Activated T-helper 1 cell treated with anti-CD3 and anti-CD28 coated beads, Interleukin-12 subunit alpha, Interleukin-12 subunit beta, Interleukin-2, Interleukin-4 antibody, amounts not matched to agents 30 ng/mL and 10 ng/mL and 1 ng/mL, durations not matched to agents 14 hours and 24 hours and 36 hours (primary cell): ENCODE measurements at regions of chrX and their contacts with region 1.

Region 1: DNA sequence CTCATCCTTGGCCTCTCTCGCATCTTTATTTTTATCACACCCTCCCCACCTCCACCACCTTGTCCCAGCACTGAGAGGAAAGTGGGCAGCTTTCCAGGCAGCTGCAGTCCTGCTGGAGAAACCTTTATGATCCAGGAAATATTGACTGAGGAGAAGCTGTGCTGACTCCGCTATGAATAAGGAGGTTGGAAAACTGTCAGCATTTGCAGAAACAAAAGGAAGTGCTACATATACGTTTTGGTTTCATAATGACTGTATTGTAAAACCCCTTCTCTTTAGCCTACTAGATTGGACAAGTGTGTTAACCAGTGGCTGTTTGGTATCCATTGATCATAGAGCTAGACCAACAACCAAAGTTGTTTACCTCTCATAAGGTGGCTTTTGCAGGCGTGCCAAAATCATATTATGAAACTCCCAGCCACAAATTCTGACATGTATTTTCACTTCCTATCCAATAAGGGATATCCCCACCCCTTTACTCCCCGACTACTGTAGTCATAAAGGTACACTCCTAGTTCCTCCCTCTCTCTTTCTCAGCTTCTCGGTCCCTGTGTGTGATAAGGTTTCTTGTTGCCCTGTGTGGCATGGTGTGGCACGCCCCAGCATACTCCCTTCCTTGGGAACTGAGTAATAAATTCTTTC is 88.4 kb downstream of the GPR143 start:
- DNase-seq: peak; percentile 37
- H3K4me3 Mint-ChIP-seq: peak overlapping the region; percentile 33
- H3K27ac Mint-ChIP-seq: peak overlapping the region; percentile 64
- H3K4me1 Mint-ChIP-seq: peaks cover 18% of the 10 kb centered on the region
- H3K27me3 Mint-ChIP-seq: no peaks in the 10 kb centered on the region

Region 2: DNA sequence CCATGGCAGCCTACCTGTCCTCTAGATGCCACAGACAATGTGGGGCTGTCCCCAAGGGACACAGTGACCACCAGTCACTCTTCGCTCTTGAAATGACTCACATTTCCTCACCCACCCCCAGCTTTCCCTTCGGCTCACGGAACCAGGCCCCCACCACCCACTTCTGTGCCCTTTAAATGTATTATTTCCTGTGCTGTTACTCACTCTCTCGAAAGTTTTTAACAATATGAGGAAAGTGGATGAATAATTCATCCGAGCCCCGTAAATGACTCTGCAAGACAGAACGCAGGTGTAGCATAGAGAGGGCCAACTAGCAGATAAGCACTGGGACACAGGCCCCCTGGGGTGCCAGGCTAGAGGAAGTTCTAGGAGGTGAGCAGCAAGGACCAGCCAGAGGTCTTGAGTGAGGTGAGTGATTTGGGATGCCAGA is 391.9 kb before region 1 on chrX:
- intact Hi-C with region 1: loop called (anchors 1 kb)
- DNase-seq: peak; percentile 14
- H3K4me3 Mint-ChIP-seq: peak overlapping the region; percentile 37
- H3K27ac Mint-ChIP-seq: peak overlapping the region; percentile 94
- H3K4me1 Mint-ChIP-seq: peaks cover 38% of the 10 kb centered on the region
- H3K27me3 Mint-ChIP-seq: peaks cover 3% of the 10 kb centered on the region

Region 3: GRCh38 chrX:9456250-9457074 is 220.8 kb before region 1 on chrX:
- intact Hi-C with region 1: loop called (anchors 1 kb)
- DNase-seq: peak; percentile 26
- H3K4me3 Mint-ChIP-seq: peak overlapping the region; percentile 23
- H3K27ac Mint-ChIP-seq: peak overlapping the region; percentile 91
- H3K4me1 Mint-ChIP-seq: peaks cover 27% of the 10 kb centered on the region
- H3K27me3 Mint-ChIP-seq: no peaks in the 10 kb centered on the region

Region 4: DNA sequence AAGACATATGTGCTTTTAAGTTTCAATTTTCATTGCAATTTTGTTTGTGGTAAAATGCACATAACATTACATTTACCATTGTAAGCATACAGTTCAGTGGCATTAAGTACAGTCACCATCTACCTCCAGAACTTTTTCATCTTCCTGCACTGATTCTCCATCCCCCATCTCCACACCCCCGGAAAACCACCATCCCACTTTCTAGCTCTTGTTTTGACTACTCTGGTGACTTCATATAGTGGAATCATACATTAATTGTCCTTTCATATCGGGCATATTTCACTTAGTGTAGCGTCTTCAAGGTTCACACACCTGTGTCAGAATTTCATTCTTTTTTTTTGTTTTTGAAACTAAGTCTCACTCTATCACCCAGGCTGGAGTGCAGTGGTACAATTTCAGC is 55.1 kb before region 1 on chrX:
- intact Hi-C with region 1: loop called (anchors 1 kb)
- DNase-seq: no peak
- H3K4me3 Mint-ChIP-seq: no peak overlapping the region
- H3K27ac Mint-ChIP-seq: no peak overlapping the region
- H3K4me1 Mint-ChIP-seq: peaks cover 31% of the 10 kb centered on the region
- H3K27me3 Mint-ChIP-seq: peaks cover 2% of the 10 kb centered on the region

Region 5: GRCh38 chrX:9708904-9709553 is 31.8 kb after region 1 on chrX:
- intact Hi-C with region 1: loop called (anchors 2 kb)
- DNase-seq: peak; percentile 62
- H3K4me3 Mint-ChIP-seq: no peak overlapping the region
- H3K27ac Mint-ChIP-seq: no peak overlapping the region
- H3K4me1 Mint-ChIP-seq: peaks cover 8% of the 10 kb centered on the region
- H3K27me3 Mint-ChIP-seq: no peaks in the 10 kb centered on the region

Region 6: DNA sequence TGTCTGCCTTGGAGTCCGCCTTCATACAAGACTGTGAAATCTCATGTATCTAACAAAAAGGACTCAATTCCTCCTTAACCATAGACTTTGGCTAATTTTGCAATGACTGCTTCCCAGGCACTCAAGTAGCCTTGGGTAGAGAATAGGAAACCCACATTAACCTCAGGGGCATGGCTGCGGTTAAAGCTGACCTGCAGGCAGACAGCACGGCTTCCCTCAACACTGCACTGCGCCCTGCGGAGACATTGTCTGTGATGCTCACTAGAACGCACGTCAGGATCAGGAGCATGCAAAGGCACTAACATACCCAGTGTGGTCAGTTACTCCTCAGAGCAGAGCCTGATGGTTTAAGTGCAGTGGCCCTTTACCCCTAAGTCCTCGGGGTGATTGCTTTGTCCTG is 98.7 kb after region 1 on chrX:
- intact Hi-C with region 1: no loop called
- DNase-seq: no peak
- H3K4me3 Mint-ChIP-seq: no peak overlapping the region
- H3K27ac Mint-ChIP-seq: no peak overlapping the region
- H3K4me1 Mint-ChIP-seq: no peaks in the 10 kb centered on the region
- H3K27me3 Mint-ChIP-seq: peaks cover 15% of the 10 kb centered on the region

Region 7: GRCh38 chrX:9942086-9942485 is 264.9 kb after region 1 on chrX:
- intact Hi-C with region 1: loop called (anchors 1 kb)
- DNase-seq: peak; percentile 56
- H3K4me3 Mint-ChIP-seq: peak overlapping the region; percentile 35
- H3K27ac Mint-ChIP-seq: peak overlapping the region; percentile 89
- H3K4me1 Mint-ChIP-seq: peaks cover 19% of the 10 kb centered on the region
- H3K27me3 Mint-ChIP-seq: peaks cover 26% of the 10 kb centered on the region